Tibial artery (tissue), 4 donors: ENCODE measurements at regions of chr1 and their contacts with region 1.

Region 1: GRCh38 chr1:15617175-15617880 is at the start of gene DDI2:
- DNase-seq: peak; percentile 98 to 99
- H3K4me3 ChIP-seq: peak within 1 kb of the TSS; percentile 80 to 88
- H3K27ac ChIP-seq: peak within 1 kb of the TSS; percentile 93 to 98
- H3K4me1 ChIP-seq: peaks cover 0 to 42% (median 28%) of the 10 kb centered on the region in 4 donors
- H3K27me3 ChIP-seq: no peaks in the 10 kb centered on the region
- CTCF ChIP-seq: no peak

Region 2: GRCh38 chr1:15573477-15573876 is 43.9 kb before region 1 on chr1:
- intact Hi-C with region 1: loop called (anchors 2 kb)
- DNase-seq: peak in 1 of 2 donors; percentile 25
- H3K4me3 ChIP-seq: no peak overlapping the region
- H3K27ac ChIP-seq: no peak overlapping the region
- H3K4me1 ChIP-seq: no peaks in the 10 kb centered on the region
- H3K27me3 ChIP-seq: no peaks in the 10 kb centered on the region
- CTCF ChIP-seq: no peak

Region 3: DNA sequence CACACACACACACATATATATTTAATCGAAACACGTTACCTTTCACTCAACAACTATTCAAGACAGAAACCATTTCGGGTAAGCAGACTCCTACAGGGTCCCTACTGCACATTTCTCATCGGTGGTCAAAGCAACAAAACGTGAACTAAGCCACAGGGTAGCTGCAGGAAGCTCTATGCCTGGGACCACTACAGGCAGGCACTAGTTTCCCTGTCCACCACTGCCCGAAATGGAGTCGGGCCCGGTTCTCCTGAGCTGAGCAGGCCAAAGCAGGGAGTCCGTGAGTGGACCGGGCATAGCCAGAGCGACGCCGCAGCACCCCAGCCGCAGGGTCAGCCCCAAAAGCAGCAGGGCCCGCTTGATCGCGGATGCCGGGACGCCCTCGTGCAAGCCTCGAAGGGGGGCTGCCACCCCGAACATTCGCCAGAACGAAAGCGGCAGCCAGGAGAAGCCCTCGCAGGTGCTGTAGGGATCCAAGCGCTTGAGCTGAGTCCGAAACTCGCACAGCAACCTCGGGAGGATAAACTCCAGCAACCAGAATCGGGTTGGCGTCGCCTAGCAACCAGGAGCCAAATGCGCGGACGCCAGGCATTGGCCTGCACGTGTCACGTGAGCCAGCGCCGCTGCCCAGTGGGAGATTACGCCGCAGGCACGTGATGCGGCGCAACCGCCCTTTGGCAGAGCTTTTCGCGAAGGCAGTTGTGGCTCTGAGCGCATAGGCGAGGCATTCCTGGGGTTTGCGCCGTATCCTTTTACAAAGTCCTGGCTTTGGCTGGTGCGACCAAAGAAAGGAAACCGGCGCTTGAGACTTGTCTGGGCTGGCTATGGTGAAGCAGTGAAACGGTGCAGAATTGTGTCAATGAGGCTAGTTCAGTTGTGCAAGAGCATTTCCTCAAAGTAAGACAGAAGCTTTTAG is 14.0 kb before region 1 on chr1:
- intact Hi-C with region 1: loop called (anchors 2 kb)
- DNase-seq: peak; percentile 97 to 98
- H3K4me3 ChIP-seq: peak overlapping the region; percentile 64 to 74
- H3K27ac ChIP-seq: peak overlapping the region; percentile 76 to 78
- H3K4me1 ChIP-seq: peaks cover 0 to 14% (median 5%) of the 10 kb centered on the region in 4 donors
- H3K27me3 ChIP-seq: no peaks in the 10 kb centered on the region
- CTCF ChIP-seq: peak in 1 of 2 experiments; percentile 23

Region 4: GRCh38 chr1:15668089-15668754 is 50.9 kb after region 1 on chr1:
- intact Hi-C with region 1: no loop called
- DNase-seq: no peak
- H3K4me3 ChIP-seq: no peak overlapping the region
- H3K27ac ChIP-seq: no peak overlapping the region
- H3K4me1 ChIP-seq: no peaks in the 10 kb centered on the region
- H3K27me3 ChIP-seq: no peaks in the 10 kb centered on the region
- CTCF ChIP-seq: no peak

Region 5: DNA sequence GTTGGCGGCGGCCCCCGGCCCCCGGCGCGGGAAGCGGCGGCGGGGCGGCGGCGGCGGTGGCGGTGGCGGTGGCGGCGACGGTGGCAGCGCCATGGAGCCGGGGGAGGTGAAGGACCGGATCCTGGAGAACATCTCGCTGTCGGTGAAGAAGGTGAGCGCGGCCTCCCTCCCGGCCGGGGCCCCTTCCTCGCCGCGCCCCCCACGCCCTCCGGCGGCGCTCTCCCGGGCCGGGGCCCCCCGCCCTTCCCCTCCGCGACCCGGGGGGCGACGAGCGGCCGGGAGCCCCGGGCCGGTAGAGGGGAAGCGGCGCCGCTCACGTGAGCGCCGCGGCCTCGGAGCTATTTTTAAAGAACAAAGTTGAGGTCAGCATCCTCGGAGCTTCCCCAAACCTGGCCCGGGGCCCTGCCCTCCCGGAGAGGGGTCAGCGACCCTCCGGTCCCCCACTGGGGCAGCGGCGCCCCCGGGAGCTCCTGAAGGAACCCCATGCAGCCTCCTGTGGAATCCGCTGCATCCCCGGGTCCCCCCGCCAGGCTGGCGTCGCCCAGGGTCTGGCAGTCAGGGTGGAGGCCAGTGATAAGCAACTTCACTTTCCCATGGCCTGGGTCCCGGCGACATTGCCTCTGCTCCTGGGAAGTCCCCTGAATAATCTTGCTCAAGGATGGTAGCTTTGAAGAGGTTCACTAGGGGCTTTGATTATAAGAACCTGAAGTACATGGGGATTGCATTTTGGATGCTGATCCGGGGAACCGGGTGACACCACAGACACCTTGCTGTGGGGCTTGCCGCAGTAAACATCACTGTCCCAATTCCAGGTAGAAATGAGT is 67.4 kb after region 1 on chr1:
- intact Hi-C with region 1: loop called (anchors 5 kb)
- DNase-seq: peak; percentile 51 to 76
- H3K4me3 ChIP-seq: peak overlapping the region; percentile 67 to 98
- H3K27ac ChIP-seq: peak overlapping the region; percentile 98
- H3K4me1 ChIP-seq: peaks cover 0 to 45% (median 23%) of the 10 kb centered on the region in 4 donors
- H3K27me3 ChIP-seq: no peaks in the 10 kb centered on the region
- CTCF ChIP-seq: peak in 1 of 2 experiments; percentile 12

Region 6: GRCh38 chr1:15714406-15715136 is 97.2 kb after region 1 on chr1:
- intact Hi-C with region 1: no loop called
- DNase-seq: no peak
- H3K4me3 ChIP-seq: no peak overlapping the region
- H3K27ac ChIP-seq: peak overlapping the region; percentile 55 to 67
- H3K4me1 ChIP-seq: peaks cover 0 to 31% (median 20%) of the 10 kb centered on the region in 4 donors
- H3K27me3 ChIP-seq: no peaks in the 10 kb centered on the region
- CTCF ChIP-seq: no peak

Region 7: DNA sequence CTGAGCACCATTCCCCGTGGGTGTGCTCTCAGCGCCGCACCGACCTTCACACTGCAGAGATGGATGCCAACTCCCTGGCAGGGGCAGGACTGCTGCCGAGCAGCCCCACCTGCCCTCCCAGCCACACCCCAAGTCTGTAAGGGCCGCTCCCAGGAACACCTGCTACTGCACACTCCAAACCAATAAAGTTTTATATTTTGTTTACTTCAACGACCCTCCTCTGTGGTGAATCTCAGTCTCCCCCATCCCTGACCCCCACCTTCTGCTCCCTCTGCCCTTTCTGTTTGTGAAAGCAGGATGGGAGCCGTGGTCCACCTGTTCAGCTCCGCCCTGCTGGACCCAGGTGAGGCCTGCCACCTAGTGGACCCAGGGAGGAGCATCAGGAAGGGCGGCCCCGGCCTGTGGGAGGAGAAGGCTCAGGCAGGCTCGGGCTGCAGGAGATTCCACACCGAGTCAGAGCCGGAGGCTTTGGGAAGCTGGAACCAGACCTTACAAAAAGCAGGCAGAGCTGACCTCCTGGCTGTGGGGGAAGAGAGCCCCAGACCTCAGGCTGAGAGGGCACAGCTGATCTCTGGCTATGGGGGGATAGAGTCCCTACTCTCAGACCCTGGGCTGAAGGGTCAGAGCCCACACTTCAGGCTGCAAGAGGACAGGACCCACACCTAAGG is 124.0 kb after region 1 on chr1:
- intact Hi-C with region 1: no loop called
- DNase-seq: peak; percentile 76 to 88
- H3K4me3 ChIP-seq: no peak overlapping the region
- H3K27ac ChIP-seq: peak overlapping the region; percentile 41 to 48
- H3K4me1 ChIP-seq: peaks cover 0 to 62% (median 25%) of the 10 kb centered on the region in 4 donors
- H3K27me3 ChIP-seq: no peaks in the 10 kb centered on the region
- CTCF ChIP-seq: peak; percentile 88 to 89